ENCODE measurements at regions of chr4 and their contacts with region 1.

Region 1: GRCh38 chr4:83490876-83491450 is 6.1 kb upstream of the ABRAXAS1 start:
- DNase-seq: no peak
- H3K4me3 ChIP-seq: no peak overlapping the region
- H3K27ac ChIP-seq: no peak overlapping the region
- H3K4me1 ChIP-seq: no peaks in the 10 kb centered on the region
- H3K27me3 ChIP-seq: no peaks in the 10 kb centered on the region
- CTCF ChIP-seq: peak in 2 of 3 donors; percentile 32 to 44
- POLR2A ChIP-seq: no peak

Region 2: GRCh38 chr4:83356899-83357661 is 133.9 kb before region 1 on chr4:
- intact Hi-C with region 1: no loop called
- DNase-seq: no peak
- H3K4me3 ChIP-seq: no peak overlapping the region
- H3K27ac ChIP-seq: no peak overlapping the region
- H3K4me1 ChIP-seq: no peaks in the 10 kb centered on the region
- H3K27me3 ChIP-seq: no peaks in the 10 kb centered on the region
- CTCF ChIP-seq: no peak
- POLR2A ChIP-seq: no peak

Region 3: DNA sequence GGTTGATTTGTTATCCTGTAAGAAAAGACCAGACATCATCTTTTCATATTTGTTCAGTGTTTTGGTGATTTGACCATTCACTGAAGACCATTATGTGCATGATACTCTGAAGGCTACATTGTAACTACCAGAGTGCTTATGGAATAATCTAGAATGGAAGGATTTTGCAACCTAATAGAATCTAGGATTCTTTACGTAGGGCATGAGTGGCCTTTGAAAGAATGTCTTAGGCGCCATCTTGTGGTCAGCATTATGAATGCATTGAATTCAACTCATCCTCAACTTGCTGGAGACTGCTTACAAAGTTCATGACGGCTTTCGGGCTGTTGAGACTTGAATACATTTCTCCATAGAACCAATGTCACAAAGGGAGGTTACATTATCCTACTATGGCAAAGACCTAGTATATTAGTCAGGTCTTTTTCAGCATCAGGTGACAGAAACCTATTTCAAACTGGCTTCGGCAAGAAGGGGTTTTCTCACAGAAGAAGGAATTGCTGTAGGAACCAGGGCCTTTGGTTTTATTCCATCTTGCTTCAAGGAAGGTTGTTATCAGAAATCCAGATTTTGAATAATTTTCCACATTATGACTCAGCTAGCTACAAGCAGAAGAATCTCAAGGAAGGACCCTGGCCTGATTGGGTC is 149.0 kb after region 1 on chr4:
- intact Hi-C with region 1: loop called (anchors 10 kb)
- DNase-seq: peak in 1 of 2 donors; percentile 30
- H3K4me3 ChIP-seq: no peak overlapping the region
- H3K27ac ChIP-seq: no peak overlapping the region
- H3K4me1 ChIP-seq: no peaks in the 10 kb centered on the region
- H3K27me3 ChIP-seq: no peaks in the 10 kb centered on the region
- CTCF ChIP-seq: peak; percentile 58 to 85 (median 74)
- POLR2A ChIP-seq: no peak